Psoas muscle (tissue), 8 donors: ENCODE measurements at regions of chr10 and their contacts with region 1.

Region 1: DNA sequence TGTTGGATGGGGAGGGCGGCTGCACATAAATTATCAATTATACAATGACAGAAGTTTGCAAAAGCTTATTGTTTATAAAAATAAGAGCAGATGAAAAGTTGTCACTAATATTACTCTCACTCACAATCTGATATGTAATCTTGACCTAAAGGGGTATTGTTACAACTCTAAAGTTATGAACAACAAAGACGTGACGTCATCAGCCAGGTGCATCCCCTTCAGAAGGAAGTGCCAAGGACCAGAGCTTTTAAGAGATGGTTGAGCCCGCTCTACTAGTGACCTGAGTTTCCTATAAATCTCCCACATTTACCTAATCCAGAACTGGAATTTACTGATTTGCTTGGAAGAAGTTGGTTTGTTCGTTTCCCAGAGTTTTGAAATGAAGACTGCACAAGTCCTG is 247.7 kb upstream of the MGMT start:
- DNase-seq: no peak
- ATAC-seq: no peak
- H3K4me3 ChIP-seq: no peak overlapping the region
- H3K27ac ChIP-seq: no peak overlapping the region
- H3K4me1 ChIP-seq: no peaks in the 10 kb centered on the region
- H3K27me3 ChIP-seq: no peaks in the 10 kb centered on the region
- CTCF ChIP-seq: no peak

Region 2: GRCh38 chr10:129253551-129254179 is 34.3 kb after region 1 on chr10:
- intact Hi-C with region 1: no loop called
- DNase-seq: no peak
- ATAC-seq: no peak
- H3K4me3 ChIP-seq: no peak overlapping the region
- H3K27ac ChIP-seq: no peak overlapping the region
- H3K4me1 ChIP-seq: no peaks in the 10 kb centered on the region
- H3K27me3 ChIP-seq: no peaks in the 10 kb centered on the region
- CTCF ChIP-seq: no peak

Region 3: DNA sequence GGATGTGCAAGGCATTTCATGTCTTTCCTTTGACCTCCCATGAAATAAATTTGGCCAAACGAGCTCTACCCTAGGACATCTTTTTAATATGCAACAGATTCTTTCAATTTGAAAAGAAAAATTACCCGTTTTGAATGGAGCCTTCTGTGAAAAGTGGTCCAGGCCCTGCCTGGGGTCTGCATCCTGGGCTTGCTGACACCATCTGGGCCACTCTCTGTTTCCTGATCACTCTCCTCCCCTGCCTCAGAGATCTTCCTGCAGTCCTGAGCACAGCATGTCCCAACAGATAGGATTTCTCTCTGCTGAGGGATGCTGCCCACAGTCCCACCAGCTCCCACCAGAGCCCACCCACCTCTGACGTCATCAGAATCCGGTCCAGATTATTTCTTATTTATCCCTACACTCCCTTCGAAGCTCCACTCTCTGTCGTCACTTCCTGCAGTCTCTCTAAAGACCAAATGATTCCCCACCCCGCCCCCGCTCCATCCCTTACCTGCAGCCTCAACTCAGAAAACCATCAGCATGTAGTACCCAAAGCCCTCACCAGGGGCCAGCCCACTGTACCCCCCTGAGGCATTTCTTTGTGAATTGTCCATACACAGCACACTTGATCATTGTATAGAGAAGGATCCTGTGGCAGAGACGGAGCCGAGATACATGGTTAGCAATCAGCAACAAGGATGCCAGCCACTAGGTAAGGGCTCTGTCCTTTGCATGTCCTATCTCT is 55.5 kb after region 1 on chr10:
- intact Hi-C with region 1: no loop called
- DNase-seq: no peak
- ATAC-seq: no peak
- H3K4me3 ChIP-seq: no peak overlapping the region
- H3K27ac ChIP-seq: no peak overlapping the region
- H3K4me1 ChIP-seq: no peaks in the 10 kb centered on the region
- H3K27me3 ChIP-seq: peaks cover 0 to 8% (median 0%) of the 10 kb centered on the region in 3 donors
- CTCF ChIP-seq: no peak

Region 4: DNA sequence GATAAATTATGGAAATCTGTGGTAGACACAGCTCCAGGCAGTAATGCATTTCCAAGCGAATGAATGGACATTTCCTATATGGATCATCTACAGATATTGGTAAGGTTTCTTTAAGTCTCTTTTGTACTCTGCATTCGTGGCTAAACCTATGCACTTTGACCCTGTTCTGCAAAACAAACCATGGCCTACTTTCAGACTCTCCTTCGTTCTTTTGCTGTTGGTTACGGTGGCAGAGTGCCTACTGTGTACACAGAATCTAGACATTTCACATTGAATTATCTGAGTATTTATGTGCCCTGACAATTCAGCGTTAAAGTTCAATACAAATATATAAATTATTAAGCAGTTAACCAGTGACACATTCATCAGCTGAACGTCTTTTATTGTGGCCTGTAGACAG is 341.0 kb after region 1 on chr10:
- intact Hi-C with region 1: loop called in 1 of 2 experiments (anchors 5 kb)
- DNase-seq: no peak
- ATAC-seq: no peak
- H3K4me3 ChIP-seq: no peak overlapping the region
- H3K27ac ChIP-seq: no peak overlapping the region
- H3K4me1 ChIP-seq: no peaks in the 10 kb centered on the region
- H3K27me3 ChIP-seq: no peaks in the 10 kb centered on the region
- CTCF ChIP-seq: no peak